ENCODE measurements at regions of chr2 and their contacts with region 1.

Region 1: DNA sequence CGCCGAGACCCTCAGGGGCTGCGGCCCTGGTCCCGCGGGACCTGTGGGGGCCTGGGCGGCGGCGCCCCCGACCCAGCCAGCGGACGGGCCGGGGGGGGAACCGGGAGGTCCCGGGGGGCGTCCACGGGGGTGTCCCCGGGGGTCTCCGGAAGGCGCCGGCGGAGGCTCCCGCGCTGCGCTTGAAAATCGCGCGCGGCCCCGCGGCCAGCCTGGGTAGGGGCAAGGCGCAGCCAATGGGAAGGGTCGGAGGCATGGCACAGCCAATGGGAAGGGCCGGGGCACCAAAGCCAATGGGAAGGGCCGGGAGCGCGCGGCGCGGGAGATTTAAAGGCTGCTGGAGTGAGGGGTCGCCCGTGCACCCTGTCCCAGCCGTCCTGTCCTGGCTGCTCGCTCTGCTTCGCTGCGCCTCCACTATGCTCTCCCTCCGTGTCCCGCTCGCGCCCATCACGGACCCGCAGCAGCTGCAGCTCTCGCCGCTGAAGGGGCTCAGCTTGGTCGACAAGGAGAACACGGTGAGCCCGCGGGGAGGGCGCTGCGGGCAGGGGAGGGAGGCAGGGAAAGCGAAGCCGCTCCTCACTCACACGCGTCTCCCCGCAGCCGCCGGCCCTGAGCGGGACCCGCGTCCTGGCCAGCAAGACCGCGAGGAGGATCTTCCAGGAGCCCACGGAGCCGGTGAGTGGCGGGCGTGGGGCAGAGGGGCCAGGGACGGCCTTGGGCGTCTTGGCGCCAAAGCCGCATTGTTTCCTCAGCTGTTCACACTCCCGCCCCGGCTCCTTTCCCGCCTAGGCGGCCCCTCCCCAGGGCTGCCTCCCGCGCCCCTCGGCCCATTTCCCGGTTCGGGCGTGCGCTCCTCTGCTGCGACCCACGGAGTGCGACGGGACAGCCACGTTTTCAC is at the start of gene RRM2:
- DNase-seq: peak; percentile 98
- H3K4me3 ChIP-seq: peak within 1 kb of the TSS; percentile 88
- H3K27ac ChIP-seq: peak within 1 kb of the TSS; percentile 98
- H3K4me1 ChIP-seq: peaks cover 18% of the 10 kb centered on the region
- H3K27me3 ChIP-seq: no peaks in the 10 kb centered on the region
- CTCF ChIP-seq: no peak
- total RNA-seq, gene RRM2: 414 and 486 TPM in 2 replicates

Region 2: DNA sequence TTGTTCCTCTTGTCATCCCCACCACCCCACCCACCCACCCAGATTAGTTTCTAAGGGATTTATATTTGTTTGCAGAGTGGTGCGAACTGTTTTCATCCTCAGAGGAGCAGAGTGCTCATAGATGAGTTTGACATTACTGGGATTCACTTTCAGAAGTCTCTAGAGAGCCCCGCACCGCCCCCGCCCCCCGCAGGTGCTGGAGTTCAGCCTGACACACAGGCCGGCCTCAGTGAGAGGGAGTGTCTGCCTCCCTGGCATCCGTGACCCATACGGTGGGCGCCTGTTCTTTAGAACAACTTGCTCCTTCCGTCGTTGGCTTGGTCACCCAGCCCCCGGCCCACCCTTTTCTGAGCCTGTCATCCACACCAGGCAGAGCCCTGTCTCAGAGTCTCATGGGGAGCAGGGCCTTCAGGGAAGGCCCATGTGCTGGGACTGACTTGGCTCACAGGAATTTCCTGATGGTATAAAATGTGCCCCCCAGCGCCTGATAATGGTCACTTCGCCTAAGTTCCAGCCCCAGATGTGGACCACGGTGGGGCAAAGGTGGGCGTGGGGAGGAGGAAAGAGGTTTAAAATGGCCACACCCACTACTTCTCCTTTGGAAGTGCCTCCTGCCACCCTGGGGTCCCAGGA is 224.4 kb after region 1 on chr2:
- CTCF ChIA-PET with region 1: no interaction called
- POLR2A ChIA-PET with region 1: no interaction called
- intact Hi-C with region 1: no loop called
- DNase-seq: no peak
- H3K4me3 ChIP-seq: no peak overlapping the region
- H3K27ac ChIP-seq: no peak overlapping the region
- H3K4me1 ChIP-seq: no peaks in the 10 kb centered on the region
- H3K27me3 ChIP-seq: no peaks in the 10 kb centered on the region
- CTCF ChIP-seq: no peak

Region 3: GRCh38 chr2:10434886-10435819 is 312.5 kb after region 1 on chr2:
- CTCF ChIA-PET with region 1: interaction called, 14 read pairs
- POLR2A ChIA-PET with region 1: no interaction called
- intact Hi-C with region 1: loop called (anchors 1 kb)
- DNase-seq: peak; percentile 84
- H3K4me3 ChIP-seq: no peak overlapping the region
- H3K27ac ChIP-seq: no peak overlapping the region
- H3K4me1 ChIP-seq: no peaks in the 10 kb centered on the region
- H3K27me3 ChIP-seq: no peaks in the 10 kb centered on the region
- CTCF ChIP-seq: peak; percentile 96

Region 4: GRCh38 chr2:10668402-10669012 is 545.9 kb after region 1 on chr2:
- CTCF ChIA-PET with region 1: no interaction called
- POLR2A ChIA-PET with region 1: no interaction called
- intact Hi-C with region 1: loop called (anchors 5 kb)
- DNase-seq: peak; percentile 78
- H3K4me3 ChIP-seq: no peak overlapping the region
- H3K27ac ChIP-seq: no peak overlapping the region
- H3K4me1 ChIP-seq: no peaks in the 10 kb centered on the region
- H3K27me3 ChIP-seq: no peaks in the 10 kb centered on the region
- CTCF ChIP-seq: peak; percentile 73